Sciatic nerve (tissue), 2 donors: ENCODE measurements at regions of chr1 and their contacts with region 1.

Region 1: DNA sequence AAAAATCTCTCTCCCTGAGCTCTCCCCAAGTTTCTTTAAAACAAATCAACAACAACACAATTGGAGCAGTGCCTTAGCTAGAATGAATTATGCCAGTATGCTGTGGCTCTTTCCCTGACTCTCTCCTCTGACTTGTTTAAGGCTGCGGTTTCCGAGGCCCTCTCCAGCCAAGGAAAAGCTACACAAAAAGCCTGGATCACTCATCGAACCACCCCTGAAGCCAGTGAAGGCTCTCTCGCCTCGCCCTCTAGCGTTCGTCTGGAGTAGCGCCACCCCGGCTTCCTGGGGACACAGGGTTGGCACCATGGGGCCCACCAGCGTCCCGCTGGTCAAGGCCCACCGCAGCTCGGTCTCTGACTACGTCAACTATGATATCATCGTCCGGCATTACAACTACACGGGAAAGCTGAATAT is 1.9 kb downstream of the S1PR1 start:
- DNase-seq: peak; percentile 91
- ATAC-seq: peak; percentile 74

Region 2: GRCh38 chr1:100769906-100770646 is 468.6 kb before region 1 on chr1:
- intact Hi-C with region 1: no loop called
- DNase-seq: no peak
- ATAC-seq: peak; percentile 38

Region 3: GRCh38 chr1:101174722-101175121 is 64.0 kb before region 1 on chr1:
- intact Hi-C with region 1: loop called (anchors 2 kb)
- DNase-seq: no peak
- ATAC-seq: no peak